ENCODE measurements at regions of chr10 and their contacts with region 1.

Region 1: GRCh38 chr10:92087750-92088395 is 164.3 kb downstream of the BTAF1 start:
- DNase-seq: peak; percentile 86
- H3K4me3 ChIP-seq: no peak overlapping the region
- H3K27ac ChIP-seq: no peak overlapping the region
- H3K4me1 ChIP-seq: peaks cover 4% of the 10 kb centered on the region
- CTCF ChIP-seq: peak; percentile 95

Region 2: DNA sequence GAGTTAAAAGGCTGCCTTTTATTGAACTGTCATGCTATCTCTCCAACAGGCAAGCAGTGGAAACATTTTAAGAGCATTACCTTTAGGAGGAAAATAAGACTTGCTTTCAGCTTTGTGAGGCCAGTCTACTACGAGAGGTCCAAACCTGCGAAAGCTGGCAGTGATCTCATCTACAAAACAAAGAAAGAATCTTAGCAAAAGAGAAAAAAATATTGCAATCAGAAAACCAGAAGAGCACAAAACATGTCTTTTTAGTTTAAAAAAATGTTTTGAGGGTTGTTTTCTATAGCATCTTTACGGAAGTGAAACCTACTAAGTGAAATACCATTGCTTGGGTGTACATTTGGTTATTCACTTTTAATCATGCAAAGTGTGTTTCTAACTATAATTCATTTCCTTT is 55.1 kb after region 1 on chr10:
- CTCF ChIA-PET with region 1: no interaction called
- POLR2A ChIA-PET with region 1: no interaction called
- intact Hi-C with region 1: no loop called
- DNase-seq: peak; percentile 60
- H3K4me3 ChIP-seq: peak overlapping the region; percentile 59
- H3K27ac ChIP-seq: peak overlapping the region; percentile 78
- H3K4me1 ChIP-seq: peaks cover 61% of the 10 kb centered on the region
- CTCF ChIP-seq: no peak

Region 3: GRCh38 chr10:92181575-92181974 is 93.7 kb after region 1 on chr10:
- CTCF ChIA-PET with region 1: no interaction called
- POLR2A ChIA-PET with region 1: interaction called, 3 read pairs
- intact Hi-C with region 1: loop called (anchors 5 kb)
- DNase-seq: peak; percentile 55
- H3K4me3 ChIP-seq: no peak overlapping the region
- H3K27ac ChIP-seq: peak overlapping the region; percentile 29
- H3K4me1 ChIP-seq: peaks cover 17% of the 10 kb centered on the region
- CTCF ChIP-seq: peak; percentile 71

Region 4: GRCh38 chr10:92240289-92241157 is 152.7 kb after region 1 on chr10:
- CTCF ChIA-PET with region 1: no interaction called
- POLR2A ChIA-PET with region 1: no interaction called
- intact Hi-C with region 1: loop called (anchors 5 kb)
- DNase-seq: peak; percentile 79
- H3K4me3 ChIP-seq: peak overlapping the region; percentile 75
- H3K27ac ChIP-seq: peak overlapping the region; percentile 16
- H3K4me1 ChIP-seq: peaks cover 43% of the 10 kb centered on the region
- CTCF ChIP-seq: no peak

Region 5: GRCh38 chr10:92432596-92432995 is 344.7 kb after region 1 on chr10:
- CTCF ChIA-PET with region 1: no interaction called
- POLR2A ChIA-PET with region 1: no interaction called
- intact Hi-C with region 1: loop called (anchors 1 kb)
- DNase-seq: no peak
- H3K4me3 ChIP-seq: no peak overlapping the region
- H3K27ac ChIP-seq: no peak overlapping the region
- H3K4me1 ChIP-seq: no peaks in the 10 kb centered on the region
- CTCF ChIP-seq: no peak

Region 6: GRCh38 chr10:92573798-92574547 is 486.1 kb after region 1 on chr10 and contains the start of gene IDE:
- CTCF ChIA-PET with region 1: no interaction called
- POLR2A ChIA-PET with region 1: no interaction called
- intact Hi-C with region 1: loop called (anchors 5 kb)
- DNase-seq: peak; percentile 89
- H3K4me3 ChIP-seq: peak within 1 kb of the TSS; percentile 95
- H3K27ac ChIP-seq: peak within 1 kb of the TSS; percentile 68
- H3K4me1 ChIP-seq: peaks cover 29% of the 10 kb centered on the region
- CTCF ChIP-seq: peak; percentile 83
- total RNA-seq, gene IDE: 14.2 and 14.3 TPM in 2 replicates

Measured in OCI-LY7 (cell line).